ENCODE measurements at regions of chr6 and their contacts with region 1.

Region 1: DNA sequence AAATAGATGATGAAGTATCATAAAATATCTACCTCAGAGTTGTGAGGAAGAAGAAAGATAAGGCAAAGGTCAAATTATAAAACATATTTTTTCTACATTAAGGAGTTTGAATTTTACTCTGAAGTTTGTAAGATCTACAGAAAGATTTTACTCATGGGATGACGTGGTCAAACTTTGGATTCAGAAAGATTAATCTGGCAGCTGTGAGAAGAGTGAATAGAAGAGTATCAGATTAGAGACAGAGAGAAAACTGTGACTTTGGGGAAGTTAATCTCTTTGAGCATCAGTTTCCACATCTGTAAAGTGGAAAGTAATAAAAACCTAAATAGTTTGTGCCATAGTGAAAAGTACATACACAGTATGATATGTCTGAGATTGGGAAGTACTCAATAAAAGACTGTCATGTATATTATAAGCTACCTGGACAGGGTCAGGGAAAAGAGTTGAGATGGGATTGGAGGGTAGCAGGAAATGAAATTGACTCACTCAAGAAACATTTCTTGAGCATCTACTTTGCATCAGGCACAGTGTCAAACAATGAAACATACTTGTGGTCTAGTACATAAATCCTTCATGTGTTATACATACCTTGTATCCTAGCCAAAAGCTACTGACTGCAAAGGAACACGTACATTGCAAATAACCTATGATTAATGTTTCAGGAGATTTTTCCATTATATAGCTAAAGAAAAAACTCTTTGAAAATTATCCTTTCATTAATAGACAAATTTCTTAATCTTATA is 222.1 kb downstream of the TMEM200A start:
- DNase-seq: no peak
- ATAC-seq: no peak
- H3K4me3 Mint-ChIP-seq: no peak overlapping the region
- H3K27ac Mint-ChIP-seq: no peak overlapping the region
- H3K4me1 Mint-ChIP-seq: peaks cover 5% of the 10 kb centered on the region
- H3K27me3 Mint-ChIP-seq: no peaks in the 10 kb centered on the region

Region 2: DNA sequence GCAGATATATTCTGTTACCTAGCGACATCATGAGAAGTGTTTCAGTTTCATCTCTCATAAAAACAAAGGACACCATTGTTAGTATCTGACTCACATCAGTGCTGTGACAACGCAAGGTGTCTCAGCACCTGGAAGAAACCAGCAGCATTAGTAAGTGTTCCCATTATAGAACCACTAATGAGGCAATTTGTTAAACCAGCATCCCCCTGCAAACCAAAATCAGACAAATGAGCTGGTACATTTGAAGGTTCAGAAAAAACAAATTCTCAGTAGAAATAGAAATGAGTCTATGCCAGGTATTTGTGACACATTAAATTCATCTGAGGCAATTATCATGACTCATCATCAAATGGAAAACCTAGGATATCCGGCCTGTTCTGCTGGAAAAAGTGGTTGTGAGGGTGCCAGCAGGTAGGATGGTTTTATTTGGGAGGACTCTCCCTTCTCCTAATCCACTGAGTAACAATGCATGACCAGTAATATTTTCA is 70.5 kb before region 1 on chr6:
- CTCF ChIA-PET with region 1: no interaction called
- DNase-seq: no peak
- ATAC-seq: peak; percentile 17
- H3K4me3 Mint-ChIP-seq: no peak overlapping the region
- H3K27ac Mint-ChIP-seq: peak overlapping the region; percentile 22
- H3K4me1 Mint-ChIP-seq: peaks cover 52% of the 10 kb centered on the region
- H3K27me3 Mint-ChIP-seq: no peaks in the 10 kb centered on the region

Region 3: DNA sequence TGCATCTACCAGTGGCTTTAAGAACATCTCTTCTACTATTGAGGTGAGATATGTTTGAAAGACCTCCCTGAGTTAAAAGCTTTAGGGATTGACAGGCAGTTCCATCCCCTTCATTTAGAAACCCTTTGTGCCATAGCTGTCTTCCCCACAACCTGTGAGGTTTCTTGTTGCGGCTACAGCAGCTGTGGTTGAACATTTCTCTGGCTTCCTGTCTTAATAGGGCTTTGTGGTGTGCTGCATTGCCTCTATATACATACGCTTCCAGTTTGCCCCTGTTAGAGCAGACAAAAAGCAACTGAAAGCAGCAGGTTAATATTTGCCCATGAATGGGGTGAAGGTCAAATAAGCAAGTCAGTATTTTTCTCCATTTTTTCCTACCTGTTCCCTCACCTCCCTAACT is 12.0 kb before region 1 on chr6:
- CTCF ChIA-PET with region 1: interaction called, 18 read pairs
- DNase-seq: peak; percentile 93
- ATAC-seq: peak; percentile 97
- H3K4me3 Mint-ChIP-seq: peak overlapping the region; percentile 38
- H3K27ac Mint-ChIP-seq: peak overlapping the region; percentile 90
- H3K4me1 Mint-ChIP-seq: peaks cover 39% of the 10 kb centered on the region
- H3K27me3 Mint-ChIP-seq: no peaks in the 10 kb centered on the region

Region 4: GRCh38 chr6:130625825-130626527 is 38.0 kb after region 1 on chr6:
- CTCF ChIA-PET with region 1: no interaction called
- DNase-seq: peak; percentile 68
- ATAC-seq: peak; percentile 94
- H3K4me3 Mint-ChIP-seq: peak overlapping the region; percentile 5
- H3K27ac Mint-ChIP-seq: peak overlapping the region; percentile 74
- H3K4me1 Mint-ChIP-seq: peaks cover 47% of the 10 kb centered on the region
- H3K27me3 Mint-ChIP-seq: no peaks in the 10 kb centered on the region

Region 5: GRCh38 chr6:130676077-130676772 is 88.3 kb after region 1 on chr6:
- CTCF ChIA-PET with region 1: no interaction called
- DNase-seq: no peak
- ATAC-seq: no peak
- H3K4me3 Mint-ChIP-seq: no peak overlapping the region
- H3K27ac Mint-ChIP-seq: no peak overlapping the region
- H3K4me1 Mint-ChIP-seq: peaks cover 18% of the 10 kb centered on the region
- H3K27me3 Mint-ChIP-seq: no peaks in the 10 kb centered on the region

Measured in activated CD8-positive, alpha-beta memory T cell treated with anti-CD3 and anti-CD28 coated beads, Interleukin-2, amount 10 ng/mL, durations not matched to agents 7 days and 5 days (primary cell).